PC-9 (cell line): ENCODE measurements at regions of chr16 and their contacts with region 1.

Region 1: DNA sequence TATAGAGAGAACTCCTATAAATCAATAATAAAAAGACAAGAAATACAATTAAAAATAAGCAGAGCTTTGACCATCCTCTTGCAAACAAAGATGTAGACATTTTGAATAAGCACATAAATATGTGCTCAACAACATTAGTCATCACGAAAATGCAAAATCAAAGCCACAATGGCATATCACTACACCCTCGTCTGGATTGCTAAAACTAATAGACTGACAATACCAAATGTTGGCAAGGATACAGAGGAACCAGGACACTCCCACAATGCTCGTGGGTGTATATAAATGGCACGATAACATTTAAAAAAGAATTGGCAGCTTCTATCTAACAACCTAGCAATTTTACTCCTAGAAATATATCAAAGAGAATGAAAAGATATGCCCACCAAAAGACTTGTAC is 530.8 kb downstream of the HAPSTR1 start:
- DNase-seq: no peak
- H3K4me3 ChIP-seq: no peak overlapping the region
- H3K27ac ChIP-seq: no peak overlapping the region
- H3K4me1 ChIP-seq: no peaks in the 10 kb centered on the region
- H3K27me3 ChIP-seq: no peaks in the 10 kb centered on the region
- CTCF ChIP-seq: no peak

Region 2: GRCh38 chr16:9518051-9518450 is 104.2 kb before region 1 on chr16:
- CTCF ChIA-PET with region 1: interaction called, 14 read pairs
- POLR2A ChIA-PET with region 1: no interaction called
- intact Hi-C with region 1: no loop called
- DNase-seq: no peak
- H3K4me3 ChIP-seq: no peak overlapping the region
- H3K27ac ChIP-seq: no peak overlapping the region
- H3K4me1 ChIP-seq: no peaks in the 10 kb centered on the region
- H3K27me3 ChIP-seq: 0 out of 2 replicates have a peak, but pooled peaks cover 4% of the 10 kb centered on the region
- CTCF ChIP-seq: no peak

Region 3: GRCh38 chr16:9633844-9634243 is 11.6 kb after region 1 on chr16:
- CTCF ChIA-PET with region 1: no interaction called
- POLR2A ChIA-PET with region 1: no interaction called
- intact Hi-C with region 1: no loop called
- DNase-seq: no peak
- H3K4me3 ChIP-seq: no peak overlapping the region
- H3K27ac ChIP-seq: no peak overlapping the region
- H3K4me1 ChIP-seq: no peaks in the 10 kb centered on the region
- H3K27me3 ChIP-seq: peaks cover 5% of the 10 kb centered on the region; the same call in 1 of the 2 replicates
- CTCF ChIP-seq: no peak